PC-3 (cell line): ENCODE measurements at regions of chr9 and their contacts with region 1.

Region 1: DNA sequence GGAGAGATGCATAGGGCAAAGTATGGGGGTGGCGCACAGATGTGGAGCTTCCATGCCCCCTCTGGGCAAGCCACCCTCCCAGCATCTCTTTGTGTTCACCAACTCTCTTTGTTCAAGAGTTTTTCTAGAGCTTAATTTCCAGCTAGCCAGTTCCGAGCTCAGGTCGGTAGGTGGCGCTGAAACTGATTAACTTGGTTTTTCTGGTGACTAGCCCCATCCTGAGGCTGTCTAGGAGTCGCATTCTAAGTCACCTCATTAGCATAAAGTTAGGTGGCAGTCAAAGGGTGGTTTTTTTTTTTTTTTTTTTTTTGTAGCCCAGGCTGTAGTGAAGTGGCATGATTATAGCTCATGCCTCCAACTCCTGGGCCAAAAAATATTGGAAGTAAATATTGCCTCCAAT is 476.4 kb downstream of the KDM4C start:
- DNase-seq: peak; percentile 67
- ATAC-seq: peak; percentile 33; the same call in 1 of the 2 replicates
- H3K4me3 ChIP-seq: no peak overlapping the region
- H3K27ac ChIP-seq: no peak overlapping the region
- H3K4me1 ChIP-seq: no peaks in the 10 kb centered on the region
- H3K27me3 ChIP-seq: no peaks in the 10 kb centered on the region
- CTCF ChIP-seq: peak; percentile 69

Region 2: DNA sequence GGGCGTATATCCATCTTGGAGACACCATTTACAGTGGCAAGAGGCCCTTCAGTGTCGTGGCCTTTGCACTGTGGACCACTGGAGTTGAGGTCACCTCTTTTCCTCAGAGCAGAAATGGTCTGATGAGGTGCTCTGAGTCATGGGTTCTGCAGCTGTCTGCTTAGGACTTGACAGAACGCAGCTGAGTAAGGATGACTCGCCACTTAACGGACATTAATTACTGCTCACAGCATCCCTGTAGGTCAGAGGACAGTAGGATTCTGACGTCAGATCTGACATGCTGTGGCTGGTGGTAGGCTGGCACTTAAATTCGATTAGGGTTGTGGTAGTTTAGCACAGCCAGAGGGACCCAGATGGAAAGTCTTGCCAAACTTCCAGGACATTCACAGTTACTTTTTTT is 86.0 kb after region 1 on chr9:
- CTCF ChIA-PET with region 1: no interaction called
- POLR2A ChIA-PET with region 1: no interaction called
- intact Hi-C with region 1: no loop called
- DNase-seq: peak; percentile 1
- ATAC-seq: no peak
- H3K4me3 ChIP-seq: no peak overlapping the region
- H3K27ac ChIP-seq: no peak overlapping the region
- H3K4me1 ChIP-seq: no peaks in the 10 kb centered on the region
- H3K27me3 ChIP-seq: no peaks in the 10 kb centered on the region
- CTCF ChIP-seq: no peak

Region 3: GRCh38 chr9:7382304-7382703 is 148.2 kb after region 1 on chr9:
- CTCF ChIA-PET with region 1: interaction called, 16 read pairs
- POLR2A ChIA-PET with region 1: no interaction called
- intact Hi-C with region 1: no loop called
- DNase-seq: no peak
- ATAC-seq: no peak
- H3K4me3 ChIP-seq: no peak overlapping the region
- H3K27ac ChIP-seq: no peak overlapping the region
- H3K4me1 ChIP-seq: no peaks in the 10 kb centered on the region
- H3K27me3 ChIP-seq: no peaks in the 10 kb centered on the region
- CTCF ChIP-seq: no peak

Region 4: GRCh38 chr9:7402334-7403027 is 168.3 kb after region 1 on chr9:
- CTCF ChIA-PET with region 1: interaction called, 10 read pairs
- POLR2A ChIA-PET with region 1: no interaction called
- intact Hi-C with region 1: no loop called
- DNase-seq: no peak
- ATAC-seq: no peak
- H3K4me3 ChIP-seq: no peak overlapping the region
- H3K27ac ChIP-seq: no peak overlapping the region
- H3K4me1 ChIP-seq: no peaks in the 10 kb centered on the region
- H3K27me3 ChIP-seq: no peaks in the 10 kb centered on the region
- CTCF ChIP-seq: no peak

Region 5: DNA sequence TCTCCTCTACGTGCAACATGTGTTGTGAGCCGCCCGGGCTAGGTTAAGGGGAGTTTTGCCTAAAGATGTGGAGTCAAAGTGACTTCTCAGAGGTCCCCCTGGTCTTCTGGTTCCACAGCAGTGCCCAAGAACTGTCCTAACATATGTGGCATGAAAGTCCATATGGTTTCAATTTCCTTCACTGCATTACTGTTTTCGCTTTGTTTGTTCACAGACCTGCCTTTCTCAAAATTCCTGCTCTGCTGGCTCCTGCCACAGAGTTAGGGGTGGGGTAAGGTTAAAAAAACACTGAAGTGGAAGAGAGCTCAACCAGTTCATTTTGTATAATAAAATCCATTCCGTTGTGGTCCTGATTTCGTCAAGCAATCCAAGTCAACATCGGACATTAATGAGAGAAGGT is 276.1 kb after region 1 on chr9:
- CTCF ChIA-PET with region 1: interaction called, 11 read pairs
- POLR2A ChIA-PET with region 1: no interaction called
- intact Hi-C with region 1: no loop called
- DNase-seq: no peak
- ATAC-seq: no peak
- H3K4me3 ChIP-seq: no peak overlapping the region
- H3K27ac ChIP-seq: no peak overlapping the region
- H3K4me1 ChIP-seq: no peaks in the 10 kb centered on the region
- H3K27me3 ChIP-seq: no peaks in the 10 kb centered on the region
- CTCF ChIP-seq: no peak